Activated CD4-positive, alpha-beta T cell treated with anti-CD3 and anti-CD28 coated beads for 36 hours (primary cell): ENCODE measurements at regions of chr16 and their contacts with region 1.

Region 1: DNA sequence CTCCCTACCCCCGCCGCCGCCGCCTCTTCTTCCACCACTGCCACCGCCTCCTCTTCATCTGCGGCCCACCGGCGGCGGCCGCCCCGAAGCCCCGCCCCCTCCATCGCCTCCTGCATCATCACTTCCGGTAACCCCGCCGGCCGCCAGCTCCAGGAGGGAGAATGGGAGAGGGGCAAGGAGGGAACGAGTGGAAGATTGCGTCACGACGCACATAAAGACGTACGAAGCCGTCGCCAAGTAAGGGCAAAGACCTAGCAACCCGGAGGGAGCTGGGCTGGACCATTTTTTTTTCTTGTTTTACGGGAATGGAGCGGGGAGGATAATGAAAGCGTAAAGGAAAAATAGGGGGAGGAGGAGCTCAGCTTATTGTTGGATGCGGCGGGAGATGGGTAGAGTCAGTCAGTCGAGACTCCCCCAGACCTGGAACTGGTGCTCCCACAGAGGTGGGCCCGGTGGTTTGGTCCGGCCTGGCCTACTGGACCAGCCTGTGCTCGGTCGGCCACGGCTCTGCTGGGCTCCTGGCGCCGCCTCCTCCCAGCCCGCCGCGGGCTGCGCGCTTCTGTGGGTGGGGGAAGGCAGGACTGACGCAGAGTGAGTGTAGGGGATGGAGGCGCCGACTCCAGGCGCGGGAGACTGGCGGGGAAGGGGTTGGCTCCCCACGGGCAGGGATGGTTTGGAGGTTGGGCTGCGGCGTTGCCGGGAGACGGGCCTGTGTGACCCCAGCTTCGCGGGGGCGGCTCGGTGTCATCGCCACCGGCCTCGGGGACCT is at the starts of genes DCUN1D3 and LYRM1:
- DNase-seq: peak; percentile 95
- ATAC-seq: peak; percentile 86
- H3K4me3 Mint-ChIP-seq: peak within 1 kb of the TSS; percentile 83
- H3K27ac Mint-ChIP-seq: peak within 1 kb of the TSS; percentile 94
- H3K4me1 Mint-ChIP-seq: peaks cover 60% of the 10 kb centered on the region
- H3K27me3 Mint-ChIP-seq: no peaks in the 10 kb centered on the region
- total RNA-seq, gene DCUN1D3: 4.2 to 5.1 TPM
- total RNA-seq, gene LYRM1: 24.7 to 29.5 TPM

Region 2: DNA sequence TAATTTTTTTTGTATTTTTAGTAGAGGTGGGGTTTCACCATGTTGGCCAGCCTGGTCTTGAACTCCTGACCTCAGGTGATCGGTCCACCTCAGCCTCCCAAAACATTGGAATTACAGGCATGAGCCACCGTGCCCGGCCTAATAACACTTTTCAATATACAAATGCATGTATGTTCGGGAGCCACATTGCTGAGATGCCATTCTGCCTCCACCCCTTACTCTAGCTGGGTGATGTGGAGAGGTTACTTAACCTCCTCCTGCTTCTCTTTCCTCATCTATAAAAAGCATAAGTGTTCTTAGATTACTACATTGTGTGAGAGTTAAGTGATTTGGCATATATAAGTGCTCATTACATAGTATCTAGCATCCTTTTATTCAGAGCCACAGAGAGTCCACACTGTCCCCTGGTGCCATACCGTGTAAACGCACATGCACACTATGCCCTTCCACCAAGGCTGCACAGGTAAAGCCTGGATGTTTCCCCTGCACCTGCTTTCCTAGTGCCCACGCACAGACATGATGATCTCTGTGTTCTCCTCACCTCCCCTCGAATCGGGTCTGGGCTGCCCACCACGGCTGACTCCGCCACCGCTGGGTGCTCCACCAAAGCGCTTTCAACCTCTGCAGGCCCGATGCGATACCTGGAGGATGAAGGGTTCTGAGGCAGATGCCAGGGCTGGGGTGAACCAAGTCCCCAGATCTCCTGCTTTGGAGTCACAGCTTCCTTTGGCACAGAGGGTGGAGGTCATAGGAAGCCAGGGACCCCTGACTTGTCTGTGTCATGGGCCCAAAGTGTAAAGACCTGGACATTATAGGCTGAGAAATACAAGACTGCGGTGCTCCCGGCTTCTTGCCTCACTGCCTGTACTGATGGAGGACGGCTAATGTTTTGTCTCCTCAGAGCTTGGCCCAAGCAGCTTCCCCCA is 275.3 kb before region 1 on chr16:
- CTCF ChIA-PET with region 1: no interaction called
- POLR2A ChIA-PET with region 1: no interaction called
- intact Hi-C with region 1: no loop called
- DNase-seq: no peak
- ATAC-seq: no peak
- H3K4me3 Mint-ChIP-seq: no peak overlapping the region
- H3K27ac Mint-ChIP-seq: no peak overlapping the region
- H3K4me1 Mint-ChIP-seq: peaks cover 4% of the 10 kb centered on the region
- H3K27me3 Mint-ChIP-seq: no peaks in the 10 kb centered on the region

Region 3: GRCh38 chr16:20741554-20742285 is 158.8 kb before region 1 on chr16 and contains the start of gene THUMPD1:
- CTCF ChIA-PET with region 1: no interaction called
- POLR2A ChIA-PET with region 1: no interaction called
- intact Hi-C with region 1: loop called in 1 of 2 experiments (anchors 1 kb)
- DNase-seq: peak; percentile 99
- ATAC-seq: peak; percentile 95
- H3K4me3 Mint-ChIP-seq: peak within 1 kb of the TSS; percentile 92
- H3K27ac Mint-ChIP-seq: peak within 1 kb of the TSS; percentile 95
- H3K4me1 Mint-ChIP-seq: peaks cover 27% of the 10 kb centered on the region
- H3K27me3 Mint-ChIP-seq: no peaks in the 10 kb centered on the region
- total RNA-seq, gene THUMPD1: 38.0 to 48.2 TPM

Region 4: GRCh38 chr16:20874088-20874581 is 26.3 kb before region 1 on chr16:
- CTCF ChIA-PET with region 1: interaction called, 6 read pairs
- POLR2A ChIA-PET with region 1: interaction called, 5 read pairs
- intact Hi-C with region 1: loop called (anchors 1 kb)
- DNase-seq: peak; percentile 17
- ATAC-seq: peak; percentile 14
- H3K4me3 Mint-ChIP-seq: peak overlapping the region; percentile 54
- H3K27ac Mint-ChIP-seq: peak overlapping the region; percentile 75
- H3K4me1 Mint-ChIP-seq: peaks cover 45% of the 10 kb centered on the region
- H3K27me3 Mint-ChIP-seq: no peaks in the 10 kb centered on the region

Region 5: DNA sequence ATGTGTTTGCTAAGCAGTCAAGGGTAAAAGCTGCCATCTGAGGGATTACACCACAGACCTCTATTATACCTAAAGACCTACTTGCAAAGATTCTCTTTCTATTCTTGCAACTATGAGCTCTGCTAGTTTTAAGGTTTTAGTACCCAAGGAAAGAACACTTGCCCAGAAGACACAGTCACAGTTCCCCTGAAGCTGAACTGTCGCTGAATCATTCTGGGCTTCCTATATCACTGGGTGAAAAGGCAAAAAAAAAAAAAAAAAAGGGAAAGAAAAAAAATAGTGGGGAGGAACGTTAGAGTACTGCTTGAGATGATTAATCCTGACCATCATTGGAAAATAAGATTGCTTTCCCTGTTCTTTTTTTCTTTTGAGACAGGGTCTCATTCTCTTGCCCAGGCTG is 37.9 kb after region 1 on chr16:
- CTCF ChIA-PET with region 1: no interaction called
- POLR2A ChIA-PET with region 1: interaction called, 7 read pairs
- intact Hi-C with region 1: loop called in 1 of 2 experiments (anchors 1 kb)
- DNase-seq: peak; percentile 48
- ATAC-seq: peak; percentile 89
- H3K4me3 Mint-ChIP-seq: no peak overlapping the region
- H3K27ac Mint-ChIP-seq: peak overlapping the region; percentile 72
- H3K4me1 Mint-ChIP-seq: peaks cover 36% of the 10 kb centered on the region
- H3K27me3 Mint-ChIP-seq: peaks cover 1% of the 10 kb centered on the region

Region 6: DNA sequence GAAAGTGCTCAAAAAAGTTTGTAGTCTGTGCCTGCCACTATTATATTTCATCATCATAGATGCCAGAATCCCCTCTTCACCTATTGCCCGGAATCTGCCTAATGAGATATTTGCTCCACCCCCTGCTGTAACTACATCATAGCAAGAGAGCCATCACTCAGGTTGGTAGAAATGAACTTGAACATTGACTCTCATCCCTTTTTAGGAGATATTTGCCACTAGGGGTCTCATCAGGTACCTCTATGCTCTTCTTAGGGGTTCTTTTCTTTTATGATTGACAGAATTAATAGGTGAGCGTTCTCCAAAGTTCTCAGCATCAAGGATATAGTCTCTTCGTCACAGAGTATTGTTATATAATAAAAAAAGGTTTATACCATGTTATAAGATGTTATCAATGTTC is 353.0 kb after region 1 on chr16:
- CTCF ChIA-PET with region 1: no interaction called
- POLR2A ChIA-PET with region 1: no interaction called
- intact Hi-C with region 1: no loop called
- DNase-seq: no peak
- ATAC-seq: no peak
- H3K4me3 Mint-ChIP-seq: no peak overlapping the region
- H3K27ac Mint-ChIP-seq: no peak overlapping the region
- H3K4me1 Mint-ChIP-seq: no peaks in the 10 kb centered on the region
- H3K27me3 Mint-ChIP-seq: peaks cover 19% of the 10 kb centered on the region

Region 7: DNA sequence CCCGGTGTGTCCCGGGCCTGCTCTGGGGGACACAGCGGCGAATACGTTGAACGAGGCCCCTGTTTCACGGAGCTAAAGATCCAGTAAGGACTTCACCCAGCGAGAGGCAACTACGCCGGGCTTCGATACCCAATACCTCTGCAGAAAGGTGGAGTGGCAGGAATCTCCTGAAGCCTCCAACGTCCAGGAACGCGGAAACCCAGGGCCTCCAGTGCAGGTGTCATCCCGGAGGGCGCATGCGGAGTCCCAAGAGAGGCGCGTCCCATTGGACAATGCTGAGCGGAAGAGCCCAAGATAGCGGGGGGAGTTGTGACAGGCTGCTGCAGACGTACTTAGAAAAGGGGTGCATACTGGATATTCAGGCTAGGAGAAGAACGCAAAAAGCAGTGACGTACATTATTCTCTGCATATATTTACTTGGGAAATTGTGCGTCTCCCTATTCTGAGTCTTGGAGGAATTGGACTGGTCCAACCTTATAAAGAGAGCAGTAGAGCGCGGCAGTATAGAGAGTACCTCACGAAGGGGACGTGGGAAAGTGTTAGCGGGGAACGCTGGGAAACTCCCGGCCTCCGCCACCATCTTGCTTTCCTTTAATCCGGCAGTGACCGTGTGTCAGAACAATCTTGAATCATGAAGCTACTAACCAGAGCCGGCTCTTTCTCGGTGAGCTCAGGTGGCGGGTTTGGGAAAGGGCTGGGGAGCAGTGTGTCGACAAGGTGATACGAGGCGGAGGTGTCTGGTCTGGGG is 1052.5 kb after region 1 on chr16 and contains the start of gene UQCRC2:
- CTCF ChIA-PET with region 1: no interaction called
- POLR2A ChIA-PET with region 1: no interaction called
- intact Hi-C with region 1: loop called in 1 of 2 experiments (anchors 2 kb)
- DNase-seq: peak; percentile 92
- ATAC-seq: peak; percentile 93
- H3K4me3 Mint-ChIP-seq: peak within 1 kb of the TSS; percentile 98
- H3K27ac Mint-ChIP-seq: peak within 1 kb of the TSS; percentile 100
- H3K4me1 Mint-ChIP-seq: peaks cover 58% of the 10 kb centered on the region
- H3K27me3 Mint-ChIP-seq: no peaks in the 10 kb centered on the region
- total RNA-seq, gene UQCRC2: 321 to 367 TPM